HepG2 (cell line): ENCODE measurements at regions of chr18 and their contacts with region 1.

Region 1: GRCh38 chr18:25896178-25896780 is 194.1 kb downstream of the SS18 start:
- DNase-seq: peak; percentile 32
- ATAC-seq: peak; percentile 65; the same call in 2 of the 3 replicates
- H3K4me3 ChIP-seq: no peak overlapping the region
- H3K27ac ChIP-seq: no peak overlapping the region
- H3K4me1 ChIP-seq: no peaks in the 10 kb centered on the region
- H3K27me3 ChIP-seq: no peaks in the 10 kb centered on the region
- CTCF ChIP-seq: peak; percentile 75
- EP300 ChIP-seq: no peak
- POLR2A ChIP-seq: no peak
- RAD21 ChIP-seq: no peak

Region 2: GRCh38 chr18:24543805-24544498 is 1352.3 kb before region 1 on chr18:
- CTCF ChIA-PET with region 1: no interaction called
- POLR2A ChIA-PET with region 1: no interaction called
- in situ Hi-C with region 1: no loop called
- intact Hi-C with region 1: loop called (anchors 10 kb)
- DNase-seq: peak; percentile 22
- ATAC-seq: peak; percentile 58; the same call in 2 of the 3 replicates
- H3K4me3 ChIP-seq: no peak overlapping the region
- H3K27ac ChIP-seq: no peak overlapping the region
- H3K4me1 ChIP-seq: no peaks in the 10 kb centered on the region
- H3K27me3 ChIP-seq: no peaks in the 10 kb centered on the region; a peak in 1 of 5 replicates
- CTCF ChIP-seq: peak; percentile 54
- EP300 ChIP-seq: no peak
- POLR2A ChIP-seq: no peak
- RAD21 ChIP-seq: no peak

Region 3: GRCh38 chr18:24600076-24600654 is 1296.1 kb before region 1 on chr18:
- CTCF ChIA-PET with region 1: interaction called, 3 read pairs
- POLR2A ChIA-PET with region 1: no interaction called
- in situ Hi-C with region 1: no loop called
- intact Hi-C with region 1: loop called (anchors 5 kb)
- DNase-seq: peak; percentile 40
- ATAC-seq: 0 out of 3 replicates have a peak, but pooled peaks have one; percentile 36
- H3K4me3 ChIP-seq: no peak overlapping the region
- H3K27ac ChIP-seq: no peak overlapping the region
- H3K4me1 ChIP-seq: no peaks in the 10 kb centered on the region
- H3K27me3 ChIP-seq: peaks cover 2 to 4% of the 10 kb centered on the region in 2 experiments; a peak in 2 of 5 replicates
- CTCF ChIP-seq: peak; percentile 50
- EP300 ChIP-seq: no peak
- POLR2A ChIP-seq: no peak
- RAD21 ChIP-seq: no peak

Region 4: DNA sequence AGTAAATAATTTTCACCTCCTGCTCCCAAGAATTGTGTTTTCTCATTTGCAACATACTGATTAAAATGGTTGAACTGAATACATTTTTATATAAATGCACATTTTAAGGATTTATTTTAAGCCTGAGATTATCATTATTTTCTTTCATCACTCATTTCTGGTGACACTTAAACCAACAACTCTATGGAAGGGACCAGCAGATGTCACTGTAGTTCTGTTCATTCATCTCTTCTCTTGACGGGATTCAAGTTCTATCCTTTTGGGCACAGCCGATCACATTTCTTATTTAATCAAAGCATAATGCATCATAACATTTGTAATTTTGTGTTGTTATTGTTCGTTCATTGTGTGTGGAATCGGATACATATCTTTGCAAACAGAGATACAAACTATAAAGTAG is 1018.0 kb before region 1 on chr18:
- CTCF ChIA-PET with region 1: interaction called, 4 read pairs
- POLR2A ChIA-PET with region 1: no interaction called
- in situ Hi-C with region 1: no loop called
- intact Hi-C with region 1: loop called (anchors 5 kb)
- DNase-seq: peak; percentile 7
- ATAC-seq: no peak; the same call in 2 of the 3 replicates
- H3K4me3 ChIP-seq: no peak overlapping the region
- H3K27ac ChIP-seq: no peak overlapping the region
- H3K4me1 ChIP-seq: no peaks in the 10 kb centered on the region
- H3K27me3 ChIP-seq: no peaks in the 10 kb centered on the region
- CTCF ChIP-seq: peak; percentile 51
- EP300 ChIP-seq: no peak
- POLR2A ChIP-seq: no peak
- RAD21 ChIP-seq: no peak

Region 5: GRCh38 chr18:25561918-25562317 is 334.4 kb before region 1 on chr18:
- CTCF ChIA-PET with region 1: interaction called, 3 read pairs
- POLR2A ChIA-PET with region 1: no interaction called
- in situ Hi-C with region 1: loop called (anchors 10 kb)
- intact Hi-C with region 1: loop called (anchors 1 kb)
- DNase-seq: peak; percentile 12
- ATAC-seq: peak; percentile 59
- H3K4me3 ChIP-seq: no peak overlapping the region
- H3K27ac ChIP-seq: no peak overlapping the region
- H3K4me1 ChIP-seq: no peaks in the 10 kb centered on the region
- H3K27me3 ChIP-seq: no peaks in the 10 kb centered on the region
- CTCF ChIP-seq: peak; percentile 34; the same call in 1 of the 2 replicates
- EP300 ChIP-seq: no peak
- POLR2A ChIP-seq: no peak
- RAD21 ChIP-seq: no peak

Region 6: GRCh38 chr18:25985707-25986394 is 89.6 kb after region 1 on chr18:
- CTCF ChIA-PET with region 1: no interaction called
- POLR2A ChIA-PET with region 1: no interaction called
- in situ Hi-C with region 1: no loop called
- intact Hi-C with region 1: no loop called
- DNase-seq: no peak
- ATAC-seq: no peak
- H3K4me3 ChIP-seq: no peak overlapping the region
- H3K27ac ChIP-seq: no peak overlapping the region
- H3K4me1 ChIP-seq: no peaks in the 10 kb centered on the region
- H3K27me3 ChIP-seq: peaks cover 0 to 5% of the 10 kb centered on the region in 2 experiments; a peak in 1 of 5 replicates
- CTCF ChIP-seq: no peak
- EP300 ChIP-seq: no peak
- POLR2A ChIP-seq: no peak
- RAD21 ChIP-seq: no peak

Region 7: GRCh38 chr18:26034850-26035497 is 138.7 kb after region 1 on chr18:
- CTCF ChIA-PET with region 1: no interaction called
- POLR2A ChIA-PET with region 1: no interaction called
- in situ Hi-C with region 1: no loop called
- intact Hi-C with region 1: no loop called
- DNase-seq: no peak
- ATAC-seq: no peak
- H3K4me3 ChIP-seq: no peak overlapping the region
- H3K27ac ChIP-seq: no peak overlapping the region
- H3K4me1 ChIP-seq: no peaks in the 10 kb centered on the region
- H3K27me3 ChIP-seq: no peaks in the 10 kb centered on the region; a peak in 1 of 5 replicates
- CTCF ChIP-seq: no peak
- EP300 ChIP-seq: no peak
- POLR2A ChIP-seq: no peak
- RAD21 ChIP-seq: no peak

Region 8: GRCh38 chr18:26206488-26206887 is 310.2 kb after region 1 on chr18:
- CTCF ChIA-PET with region 1: no interaction called
- POLR2A ChIA-PET with region 1: no interaction called
- in situ Hi-C with region 1: no loop called
- intact Hi-C with region 1: no loop called
- DNase-seq: no peak
- ATAC-seq: no peak
- H3K4me3 ChIP-seq: no peak overlapping the region
- H3K27ac ChIP-seq: no peak overlapping the region
- H3K4me1 ChIP-seq: no peaks in the 10 kb centered on the region
- H3K27me3 ChIP-seq: no peaks in the 10 kb centered on the region; a peak in 1 of 5 replicates
- CTCF ChIP-seq: no peak
- EP300 ChIP-seq: no peak
- POLR2A ChIP-seq: no peak
- RAD21 ChIP-seq: no peak